Activated CD4-positive, alpha-beta T cell treated with anti-CD3 and anti-CD28 coated beads for 36 hours (primary cell): ENCODE measurements at regions of chr3 and their contacts with region 1.

Region 1: DNA sequence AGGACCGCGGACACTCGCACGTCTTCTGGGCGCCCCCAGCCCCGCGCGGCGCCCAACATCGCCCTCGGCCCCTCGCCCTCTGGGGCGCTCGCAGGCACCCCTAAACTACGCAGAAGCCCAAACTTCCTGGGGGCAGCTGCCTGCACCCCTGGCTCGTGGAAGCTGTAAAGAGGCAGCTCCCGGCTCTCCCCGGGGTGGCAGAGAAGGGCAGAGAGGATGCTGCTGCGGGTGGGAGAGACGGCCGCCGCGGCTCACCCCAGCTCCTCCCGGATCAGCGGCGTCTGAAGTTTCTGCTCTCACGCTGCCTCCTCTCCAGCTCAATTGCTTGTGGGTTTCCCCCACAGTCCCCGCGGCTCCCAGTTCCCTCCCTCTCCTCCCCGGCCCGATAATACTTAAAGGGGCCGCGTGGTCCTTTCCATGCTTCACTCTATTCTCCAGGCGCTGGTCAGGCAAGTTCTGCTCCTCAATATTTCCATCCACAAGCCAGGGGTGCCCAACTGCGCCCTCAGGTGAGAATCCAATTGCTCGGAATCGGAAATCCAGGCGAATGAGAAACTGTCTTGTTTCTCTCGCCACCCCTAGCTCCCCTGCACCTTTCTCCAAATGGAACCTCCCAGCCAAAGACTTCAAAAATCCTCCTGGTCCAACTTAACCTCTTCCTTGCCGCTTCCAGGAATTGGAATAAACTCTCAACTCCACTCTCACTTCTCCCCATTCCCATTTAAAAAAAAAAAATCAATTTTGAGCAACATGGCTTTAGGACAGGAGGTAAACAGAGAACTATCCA is 748.5 kb downstream of the ROBO1 start:
- DNase-seq: peak; percentile 38
- ATAC-seq: peak; percentile 48
- H3K4me3 Mint-ChIP-seq: no peak overlapping the region
- H3K27ac Mint-ChIP-seq: no peak overlapping the region
- H3K4me1 Mint-ChIP-seq: peaks cover 3% of the 10 kb centered on the region
- H3K27me3 Mint-ChIP-seq: peaks cover 11% of the 10 kb centered on the region

Region 2: GRCh38 chr3:78670746-78671145 is 348.6 kb before region 1 on chr3:
- CTCF ChIA-PET with region 1: no interaction called
- POLR2A ChIA-PET with region 1: no interaction called
- intact Hi-C with region 1: loop called in 1 of 2 experiments (anchors 5 kb)
- DNase-seq: no peak
- ATAC-seq: no peak
- H3K4me3 Mint-ChIP-seq: no peak overlapping the region
- H3K27ac Mint-ChIP-seq: no peak overlapping the region
- H3K4me1 Mint-ChIP-seq: no peaks in the 10 kb centered on the region
- H3K27me3 Mint-ChIP-seq: no peaks in the 10 kb centered on the region

Region 3: DNA sequence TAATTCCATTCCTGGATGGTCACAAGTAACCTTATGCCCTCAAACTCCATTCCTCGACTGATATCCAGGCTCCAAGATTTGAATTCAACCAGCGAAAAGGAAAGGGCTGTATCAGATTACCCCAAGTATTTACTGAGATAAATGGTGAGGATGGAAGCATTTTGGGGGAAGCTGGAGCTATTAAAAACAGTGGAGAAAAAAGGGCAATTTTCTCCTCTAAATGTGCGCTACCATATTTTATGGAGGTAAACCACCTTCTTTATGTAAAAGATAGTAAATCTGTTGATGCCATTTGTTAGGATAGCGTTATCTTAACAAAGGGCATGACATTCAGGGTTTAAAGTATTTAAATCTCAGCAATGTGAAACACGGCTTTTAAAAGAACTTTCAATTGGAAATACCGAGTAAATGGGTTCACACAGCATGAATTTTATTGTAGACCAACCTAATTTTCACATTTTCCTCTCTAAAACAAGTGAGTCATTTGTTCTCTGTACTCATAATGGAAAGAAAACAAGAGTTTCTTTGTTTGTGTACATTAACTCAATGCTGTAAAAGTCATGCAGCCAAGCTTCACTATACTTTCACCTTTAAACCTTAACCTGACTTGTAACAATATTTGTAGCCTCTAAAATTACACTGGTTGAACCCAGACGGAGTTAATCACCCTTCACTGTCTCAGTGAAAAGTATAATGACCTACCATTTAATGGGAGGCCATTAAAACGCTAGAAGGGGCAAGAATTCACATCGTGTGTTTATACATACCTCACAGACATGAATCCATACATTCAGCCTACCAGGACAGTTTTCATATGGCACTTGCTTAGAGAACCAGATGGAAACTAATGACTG is 24.9 kb before region 1 on chr3:
- CTCF ChIA-PET with region 1: no interaction called
- POLR2A ChIA-PET with region 1: no interaction called
- intact Hi-C with region 1: no loop called
- DNase-seq: no peak
- ATAC-seq: no peak
- H3K4me3 Mint-ChIP-seq: no peak overlapping the region
- H3K27ac Mint-ChIP-seq: no peak overlapping the region
- H3K4me1 Mint-ChIP-seq: no peaks in the 10 kb centered on the region
- H3K27me3 Mint-ChIP-seq: no peaks in the 10 kb centered on the region

Region 4: GRCh38 chr3:79047581-79047980 is 28.3 kb after region 1 on chr3:
- CTCF ChIA-PET with region 1: no interaction called
- POLR2A ChIA-PET with region 1: no interaction called
- intact Hi-C with region 1: no loop called
- DNase-seq: no peak
- ATAC-seq: no peak
- H3K4me3 Mint-ChIP-seq: no peak overlapping the region
- H3K27ac Mint-ChIP-seq: no peak overlapping the region
- H3K4me1 Mint-ChIP-seq: no peaks in the 10 kb centered on the region
- H3K27me3 Mint-ChIP-seq: no peaks in the 10 kb centered on the region

Region 5: GRCh38 chr3:79167651-79168416 is 148.5 kb after region 1 on chr3:
- CTCF ChIA-PET with region 1: no interaction called
- POLR2A ChIA-PET with region 1: no interaction called
- intact Hi-C with region 1: no loop called
- DNase-seq: no peak
- ATAC-seq: no peak
- H3K4me3 Mint-ChIP-seq: no peak overlapping the region
- H3K27ac Mint-ChIP-seq: no peak overlapping the region
- H3K4me1 Mint-ChIP-seq: no peaks in the 10 kb centered on the region
- H3K27me3 Mint-ChIP-seq: no peaks in the 10 kb centered on the region